PC-9 (cell line): ENCODE measurements at regions of chr3 and their contacts with region 1.

Region 1: GRCh38 chr3:193982258-193982659 is 153.7 kb upstream of the HES1 start:
- DNase-seq: peak in 1 of 2 experiments; percentile 97
- H3K4me3 ChIP-seq: no peak overlapping the region
- H3K27ac ChIP-seq: no peak overlapping the region
- H3K4me1 ChIP-seq: 0 out of 2 replicates have a peak, but pooled peaks cover 6% of the 10 kb centered on the region
- H3K27me3 ChIP-seq: no peaks in the 10 kb centered on the region
- CTCF ChIP-seq: no peak

Region 2: DNA sequence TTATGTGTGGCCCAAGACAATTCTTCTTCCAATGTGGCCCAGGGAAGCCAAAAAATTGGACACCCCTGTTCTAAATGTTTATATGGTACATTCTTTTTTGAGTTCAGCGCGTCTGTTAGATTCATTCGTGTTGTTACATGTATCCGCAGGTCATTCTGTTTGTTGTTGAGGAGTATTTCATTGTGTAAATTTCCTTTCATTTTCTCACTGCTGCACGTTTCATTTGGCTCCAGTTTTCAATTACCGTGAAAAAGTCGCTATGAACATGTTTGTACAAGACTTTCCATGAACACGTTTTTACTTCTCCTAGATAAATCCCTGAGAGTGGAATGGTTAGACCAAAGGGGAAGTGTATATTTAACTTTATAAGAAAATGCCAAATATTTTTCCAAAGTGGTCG is 396.7 kb before region 1 on chr3:
- CTCF ChIA-PET with region 1: no interaction called
- POLR2A ChIA-PET with region 1: no interaction called
- intact Hi-C with region 1: no loop called
- DNase-seq: peak in 1 of 2 experiments; percentile 4
- H3K4me3 ChIP-seq: no peak overlapping the region
- H3K27ac ChIP-seq: no peak overlapping the region
- H3K4me1 ChIP-seq: peaks cover 12% of the 10 kb centered on the region
- H3K27me3 ChIP-seq: no peaks in the 10 kb centered on the region
- CTCF ChIP-seq: no peak

Region 3: DNA sequence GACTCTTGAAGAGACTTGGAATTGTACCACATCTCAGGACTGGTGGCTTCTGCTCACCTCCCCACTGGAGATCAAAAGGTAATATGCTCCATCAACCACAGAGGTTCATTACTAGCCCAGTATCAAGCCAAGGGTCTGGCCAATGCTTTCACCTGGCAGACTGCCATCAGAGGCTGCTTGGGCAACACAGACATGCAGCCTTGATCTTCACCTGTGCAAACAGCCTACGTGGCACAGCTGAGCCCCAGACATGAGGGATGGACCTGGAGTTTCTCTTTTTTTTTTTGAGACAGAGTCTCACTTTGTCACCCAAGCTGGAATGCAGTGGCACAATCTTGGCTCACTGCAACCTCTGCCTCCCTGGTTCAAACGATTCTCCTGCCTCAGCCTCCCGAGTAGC is 48.1 kb after region 1 on chr3:
- CTCF ChIA-PET with region 1: no interaction called
- POLR2A ChIA-PET with region 1: no interaction called
- intact Hi-C with region 1: loop called (anchors 5 kb)
- DNase-seq: peak; percentile 69 to 88
- H3K4me3 ChIP-seq: no peak overlapping the region
- H3K27ac ChIP-seq: peak overlapping the region; percentile 40
- H3K4me1 ChIP-seq: peaks cover 53% of the 10 kb centered on the region
- H3K27me3 ChIP-seq: no peaks in the 10 kb centered on the region
- CTCF ChIP-seq: no peak